ENCODE measurements at regions of chr5 and their contacts with region 1.

Region 1: DNA sequence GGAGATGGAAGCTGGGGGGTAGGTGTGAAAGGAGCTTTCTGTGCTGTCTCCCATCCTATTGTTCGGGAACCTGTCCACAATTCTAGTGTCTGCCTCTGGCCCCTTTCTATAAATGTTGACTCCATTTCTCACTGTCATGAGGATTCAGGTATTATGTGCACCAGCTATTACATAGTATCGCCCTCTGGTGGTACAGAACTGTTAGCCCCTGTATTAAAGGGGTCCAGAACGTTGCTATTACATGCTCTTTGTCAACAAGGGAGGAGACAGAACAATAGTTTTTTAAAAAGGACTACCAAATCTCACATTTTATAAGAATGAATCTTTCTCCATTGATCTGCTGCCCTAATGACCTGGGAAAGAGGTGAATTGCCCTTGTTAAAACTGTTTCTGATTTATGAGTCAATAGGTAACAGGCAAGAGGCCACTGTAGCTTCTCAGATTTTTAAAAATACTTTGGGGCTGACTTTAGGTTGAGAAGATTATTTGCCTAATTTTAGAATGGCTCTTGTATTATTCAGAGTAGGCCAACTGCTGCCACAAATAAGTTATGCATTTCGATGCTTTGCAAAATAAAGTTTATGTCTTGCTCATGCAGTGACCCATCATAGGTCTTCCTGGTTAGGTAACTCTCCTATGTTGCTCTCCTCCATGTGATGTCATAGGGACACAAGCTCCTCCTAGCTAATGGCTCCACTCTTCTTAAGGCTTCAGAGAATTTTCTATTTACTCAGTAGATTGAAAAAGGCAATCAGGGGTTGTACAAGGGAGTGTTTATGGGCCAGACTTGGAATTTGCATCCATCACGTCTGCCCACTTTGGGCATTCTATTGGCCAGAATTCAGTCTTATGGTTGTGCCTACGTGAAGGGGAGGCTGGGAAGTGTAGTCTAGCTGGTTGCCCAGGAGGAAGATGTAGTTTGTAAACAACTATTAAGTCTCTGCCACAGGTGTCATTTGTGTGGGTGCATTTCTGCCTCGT is 20.8 kb downstream of the DCANP1 start:
- DNase-seq: peak in 2 of 3 donors; percentile 68 to 75
- H3K4me3 ChIP-seq: peak overlapping the region in 1 of 3 experiments; percentile 31
- H3K4me3 Mint-ChIP-seq: no peak overlapping the region
- H3K27ac ChIP-seq: peak overlapping the region; percentile 31 to 73
- H3K27ac Mint-ChIP-seq: peak overlapping the region; percentile 86 to 96 (median 94)
- H3K4me1 ChIP-seq: peaks cover 72 to 77% of the 10 kb centered on the region in 2 donors
- H3K4me1 Mint-ChIP-seq: peaks cover 77% of the 10 kb centered on the region
- H3K27me3 ChIP-seq: no peaks in the 10 kb centered on the region
- H3K27me3 Mint-ChIP-seq: peaks cover 0 to 2% (median 0%) of the 10 kb centered on the region in 3 donors
- CTCF ChIP-seq: peak; percentile 78

Region 2: DNA sequence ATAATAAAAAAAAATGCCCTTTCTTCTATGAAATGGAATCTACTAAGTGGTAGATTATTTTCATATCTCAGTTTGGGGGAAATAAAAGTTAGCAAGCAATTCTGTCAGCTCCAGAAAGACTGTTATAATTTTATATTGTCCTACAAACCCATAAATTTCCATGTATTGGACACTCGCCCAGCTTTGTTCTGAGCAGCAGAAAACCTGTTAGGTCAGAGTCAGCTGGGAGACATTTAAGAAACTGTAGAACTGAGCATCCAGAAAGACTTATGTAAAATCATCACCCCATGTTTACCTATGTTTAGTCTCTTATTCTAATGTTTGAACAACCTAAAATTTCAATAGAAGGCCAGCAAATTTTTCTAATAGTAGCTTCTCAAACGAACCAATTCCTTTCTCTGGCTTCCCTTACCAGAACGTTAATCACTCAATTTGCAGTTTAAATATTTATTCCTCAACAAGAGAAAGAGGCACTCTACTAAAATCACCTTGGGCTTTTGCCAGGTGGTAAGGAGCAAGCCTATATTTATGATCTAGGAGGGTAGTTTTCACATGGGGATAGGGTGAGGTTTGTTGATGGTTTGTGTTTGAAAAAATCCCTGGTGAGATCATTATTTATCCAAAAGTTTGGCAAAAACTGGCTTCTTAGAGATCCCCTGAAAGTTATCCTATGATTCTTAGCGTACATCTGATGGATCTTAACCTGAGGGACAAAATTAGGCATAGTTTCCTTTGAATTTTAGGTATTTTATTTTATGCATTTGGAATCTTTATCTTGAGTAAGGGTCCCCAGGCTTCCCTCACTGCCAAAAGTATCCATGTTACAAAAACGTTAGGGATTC is 61.8 kb before region 1 on chr5:
- intact Hi-C with region 1: no loop called
- DNase-seq: no peak
- H3K4me3 ChIP-seq: no peak overlapping the region
- H3K4me3 Mint-ChIP-seq: no peak overlapping the region
- H3K27ac ChIP-seq: peak overlapping the region in 1 of 2 donors; percentile 69
- H3K27ac Mint-ChIP-seq: peak overlapping the region in 4 of 7 donors; percentile 12 to 67 (median 50)
- H3K4me1 ChIP-seq: no peaks in the 10 kb centered on the region
- H3K4me1 Mint-ChIP-seq: peaks cover 34% of the 10 kb centered on the region
- H3K27me3 ChIP-seq: no peaks in the 10 kb centered on the region
- H3K27me3 Mint-ChIP-seq: no peaks in the 10 kb centered on the region
- CTCF ChIP-seq: no peak

Region 3: DNA sequence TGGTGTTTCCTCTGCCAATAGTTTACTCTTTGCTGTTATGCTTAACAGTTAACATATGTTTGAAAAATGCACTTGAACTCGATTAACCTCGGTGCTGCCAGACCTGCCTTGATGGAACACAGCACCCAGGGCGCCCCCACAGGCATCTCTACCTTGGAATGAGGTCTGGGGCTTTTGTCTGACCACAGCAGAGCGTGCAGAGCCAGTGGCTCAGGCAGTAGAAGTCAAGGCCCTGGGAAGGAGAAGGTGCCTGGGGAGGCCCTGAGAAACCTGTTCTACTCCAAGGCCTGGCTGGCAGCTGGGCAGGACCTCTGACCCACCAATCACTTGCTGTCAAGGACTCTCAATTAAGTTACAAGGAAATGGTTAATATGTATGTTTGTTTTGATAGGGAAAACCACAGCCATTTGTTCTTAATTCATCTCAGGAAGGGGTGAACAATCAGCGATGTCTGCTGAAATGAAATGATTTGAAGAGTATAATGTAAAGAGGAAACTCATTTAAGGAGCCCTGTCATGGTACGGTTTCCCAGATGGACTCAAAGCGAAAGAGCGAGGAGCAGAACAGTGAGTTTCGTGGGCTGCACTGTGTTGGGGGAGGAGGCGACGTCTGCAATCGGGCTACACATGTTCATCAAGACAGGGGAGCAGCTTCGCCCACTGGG is 49.3 kb before region 1 on chr5:
- intact Hi-C with region 1: loop called in 1 of 2 experiments (anchors 10 kb)
- DNase-seq: peak in 2 of 3 donors; percentile 28 to 38
- H3K4me3 ChIP-seq: no peak overlapping the region
- H3K4me3 Mint-ChIP-seq: peak overlapping the region; percentile 37 to 73
- H3K27ac ChIP-seq: peak overlapping the region; percentile 62 to 63
- H3K27ac Mint-ChIP-seq: peak overlapping the region; percentile 80 to 95 (median 91)
- H3K4me1 ChIP-seq: peaks cover 45 to 80% of the 10 kb centered on the region in 2 donors
- H3K4me1 Mint-ChIP-seq: peaks cover 84% of the 10 kb centered on the region
- H3K27me3 ChIP-seq: no peaks in the 10 kb centered on the region
- H3K27me3 Mint-ChIP-seq: no peaks in the 10 kb centered on the region
- CTCF ChIP-seq: no peak

Region 4: GRCh38 chr5:135410348-135410747 is 16.0 kb before region 1 on chr5:
- intact Hi-C with region 1: no loop called
- DNase-seq: no peak
- H3K4me3 ChIP-seq: no peak overlapping the region
- H3K4me3 Mint-ChIP-seq: no peak overlapping the region
- H3K27ac ChIP-seq: no peak overlapping the region
- H3K27ac Mint-ChIP-seq: no peak overlapping the region
- H3K4me1 ChIP-seq: no peaks in the 10 kb centered on the region
- H3K4me1 Mint-ChIP-seq: no peaks in the 10 kb centered on the region
- H3K27me3 ChIP-seq: no peaks in the 10 kb centered on the region
- H3K27me3 Mint-ChIP-seq: no peaks in the 10 kb centered on the region
- CTCF ChIP-seq: no peak

Region 5: DNA sequence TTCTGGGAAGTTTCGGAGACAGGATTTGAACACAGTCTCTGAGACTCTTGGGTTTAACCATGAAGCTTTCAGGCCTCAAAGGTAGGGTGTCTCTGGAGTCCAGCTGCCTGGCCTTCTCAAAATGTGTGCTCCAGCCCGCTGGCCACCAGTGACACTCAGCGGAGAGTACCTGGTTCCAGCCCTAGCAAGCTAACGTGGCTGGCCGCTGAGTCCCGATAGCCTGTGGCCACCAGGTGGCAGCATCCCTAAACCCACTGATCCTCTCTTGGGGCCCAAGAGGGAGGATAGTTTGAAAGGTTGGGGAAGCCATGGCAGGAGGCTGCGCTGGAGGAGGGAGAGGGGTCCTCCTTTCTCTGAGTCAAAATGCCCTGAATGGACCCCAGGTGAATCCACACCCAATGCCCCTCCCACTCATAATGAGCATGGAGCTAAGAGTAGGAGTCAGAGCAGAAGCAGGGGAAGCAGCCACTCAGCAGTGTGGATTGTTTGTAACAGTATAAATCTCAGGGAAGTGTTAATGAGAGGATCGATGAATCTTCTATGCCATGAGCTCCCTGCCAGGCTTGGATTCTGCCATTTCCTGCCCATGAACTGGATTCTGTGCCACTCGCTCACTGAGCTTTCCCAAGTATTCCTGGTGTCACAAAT is 31.2 kb after region 1 on chr5:
- intact Hi-C with region 1: loop called in 1 of 2 experiments (anchors 5 kb)
- DNase-seq: peak; percentile 62 to 80 (median 76)
- H3K4me3 ChIP-seq: no peak overlapping the region
- H3K4me3 Mint-ChIP-seq: no peak overlapping the region
- H3K27ac ChIP-seq: no peak overlapping the region
- H3K27ac Mint-ChIP-seq: peak overlapping the region in 6 of 7 donors; percentile 18 to 98 (median 68)
- H3K4me1 ChIP-seq: peaks cover 43 to 45% of the 10 kb centered on the region in 2 donors
- H3K4me1 Mint-ChIP-seq: peaks cover 46% of the 10 kb centered on the region
- H3K27me3 ChIP-seq: no peaks in the 10 kb centered on the region
- H3K27me3 Mint-ChIP-seq: peaks cover 0 to 12% (median 0%) of the 10 kb centered on the region in 3 donors
- CTCF ChIP-seq: peak; percentile 93

Region 6: DNA sequence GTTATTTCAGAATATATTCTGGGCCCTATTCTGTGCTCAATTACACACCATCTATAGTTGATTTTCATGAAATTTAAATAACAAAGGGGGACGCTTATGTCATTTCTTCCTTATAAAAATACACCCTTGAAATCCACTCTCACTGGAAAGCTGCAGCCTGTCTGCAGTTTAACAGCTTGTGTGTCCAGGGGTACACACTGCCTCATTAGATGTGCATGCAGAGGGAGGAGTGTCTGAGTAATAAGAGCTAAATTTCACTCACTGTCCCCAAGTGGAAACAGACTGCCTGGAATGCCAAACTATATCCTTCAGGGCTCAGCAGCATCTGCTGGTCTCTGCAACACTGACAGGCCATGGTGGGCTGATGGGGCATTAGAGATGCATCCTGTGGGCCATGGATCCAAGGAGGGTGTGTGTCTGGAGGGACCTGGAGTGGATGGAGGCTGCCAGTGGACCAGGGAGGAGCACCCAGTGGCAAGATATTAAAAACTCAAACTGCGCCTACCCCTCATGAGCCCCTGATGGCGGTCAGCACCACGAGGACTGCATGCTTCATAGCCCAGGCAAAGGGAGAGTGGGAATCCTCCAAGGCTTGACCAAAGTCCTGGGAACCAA is 41.6 kb after region 1 on chr5:
- intact Hi-C with region 1: no loop called
- DNase-seq: no peak
- H3K4me3 ChIP-seq: no peak overlapping the region
- H3K4me3 Mint-ChIP-seq: peak overlapping the region in 1 of 2 donors; percentile 52
- H3K27ac ChIP-seq: no peak overlapping the region
- H3K27ac Mint-ChIP-seq: no peak overlapping the region
- H3K4me1 ChIP-seq: peaks cover 7 to 9% of the 10 kb centered on the region in 2 donors
- H3K4me1 Mint-ChIP-seq: peaks cover 9% of the 10 kb centered on the region
- H3K27me3 ChIP-seq: peaks cover 8 to 53% of the 10 kb centered on the region in 2 donors
- H3K27me3 Mint-ChIP-seq: peaks cover 34 to 63% (median 42%) of the 10 kb centered on the region in 3 donors
- CTCF ChIP-seq: no peak

Measured in CD14-positive monocyte (primary cell).